H1 (cell line): ENCODE measurements at regions of chr3 and their contacts with region 1.

Region 1: GRCh38 chr3:39447637-39448483 is 19.6 kb upstream of the MOBP start:
- DNase-seq: peak; percentile 46 to 69
- H3K4me3 ChIP-seq: no peak overlapping the region
- H3K27ac ChIP-seq: no peak overlapping the region
- H3K4me1 ChIP-seq: no peaks in the 10 kb centered on the region
- H3K27me3 ChIP-seq: no peaks in the 10 kb centered on the region
- CTCF ChIP-seq: peak; percentile 52 to 97 (median 90)
- EP300 ChIP-seq: no peak
- POLR2A ChIP-seq: no peak
- RAD21 ChIP-seq: peak; percentile 91 to 95

Region 2: GRCh38 chr3:39414421-39414907 is 33.4 kb before region 1 on chr3:
- CTCF ChIA-PET with region 1: interaction called, 14 read pairs
- POLR2A ChIA-PET with region 1: interaction called, 30 read pairs
- DNase-seq: peak in 1 of 2 experiments; percentile 61
- H3K4me3 ChIP-seq: no peak overlapping the region
- H3K27ac ChIP-seq: peak overlapping the region; percentile 32; the same call in 1 of the 2 replicates
- H3K4me1 ChIP-seq: peaks cover 0 to 3% (median 0%) of the 10 kb centered on the region in 4 experiments; a peak in 3 of 7 replicates
- H3K27me3 ChIP-seq: no peaks in the 10 kb centered on the region
- CTCF ChIP-seq: no peak
- EP300 ChIP-seq: no peak
- POLR2A ChIP-seq: peak; percentile 86 to 95
- RAD21 ChIP-seq: no peak

Region 3: GRCh38 chr3:39434574-39434973 is 13.3 kb before region 1 on chr3:
- CTCF ChIA-PET with region 1: interaction called, 36 read pairs
- POLR2A ChIA-PET with region 1: no interaction called
- DNase-seq: no peak
- H3K4me3 ChIP-seq: no peak overlapping the region
- H3K27ac ChIP-seq: no peak overlapping the region; the same call in 1 of the 2 replicates
- H3K4me1 ChIP-seq: no peaks in the 10 kb centered on the region
- H3K27me3 ChIP-seq: no peaks in the 10 kb centered on the region
- CTCF ChIP-seq: no peak
- EP300 ChIP-seq: no peak
- POLR2A ChIP-seq: no peak
- RAD21 ChIP-seq: no peak

Region 4: DNA sequence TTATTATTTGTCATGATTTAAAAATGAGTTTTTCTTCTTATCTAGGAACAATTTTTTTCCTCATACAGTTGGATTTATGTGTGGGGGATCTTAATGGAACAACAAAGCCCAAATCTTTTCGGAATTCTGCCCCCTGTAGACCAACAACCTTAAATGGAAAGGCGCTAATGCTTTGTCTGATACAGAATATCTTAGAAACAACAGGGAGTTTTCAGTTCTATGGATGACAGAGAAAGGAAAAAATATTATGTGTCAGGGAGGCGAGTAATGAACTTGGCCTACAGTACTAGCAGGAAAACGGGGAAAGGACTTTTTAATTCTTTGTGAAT is 20.2 kb after region 1 on chr3:
- CTCF ChIA-PET with region 1: interaction called, 18 read pairs
- POLR2A ChIA-PET with region 1: interaction called, 3 read pairs
- DNase-seq: no peak
- H3K4me3 ChIP-seq: no peak overlapping the region
- H3K27ac ChIP-seq: no peak overlapping the region
- H3K4me1 ChIP-seq: peaks cover 0 to 5% (median 1%) of the 10 kb centered on the region in 4 experiments; a peak in 3 of 7 replicates
- H3K27me3 ChIP-seq: no peaks in the 10 kb centered on the region
- CTCF ChIP-seq: peak in 1 of 3 experiments; percentile 26; a peak in 1 of 4 replicates
- EP300 ChIP-seq: no peak
- POLR2A ChIP-seq: no peak
- RAD21 ChIP-seq: no peak

Region 5: DNA sequence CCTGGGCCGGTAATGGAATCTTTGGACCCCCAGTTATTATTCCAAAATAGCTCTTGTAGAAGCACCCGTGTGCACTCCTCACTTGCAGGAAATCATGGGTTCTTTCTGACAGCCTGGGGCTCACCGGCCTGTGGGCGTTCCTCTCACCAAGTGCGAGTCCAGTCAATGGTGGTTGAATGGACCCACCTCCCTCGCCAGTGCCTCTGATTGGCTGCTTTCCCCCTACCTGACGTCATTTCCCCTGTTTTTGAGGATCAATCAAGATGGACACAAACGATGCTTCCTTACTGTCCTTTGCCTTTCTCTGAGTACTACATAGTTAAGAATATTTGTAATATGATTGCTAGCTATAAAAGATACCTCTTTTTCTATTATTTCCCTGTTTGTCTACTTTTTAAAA is 37.7 kb after region 1 on chr3:
- CTCF ChIA-PET with region 1: interaction called, 12 read pairs
- POLR2A ChIA-PET with region 1: no interaction called
- DNase-seq: no peak
- H3K4me3 ChIP-seq: no peak overlapping the region
- H3K27ac ChIP-seq: no peak overlapping the region
- H3K4me1 ChIP-seq: no peaks in the 10 kb centered on the region
- H3K27me3 ChIP-seq: no peaks in the 10 kb centered on the region
- CTCF ChIP-seq: no peak
- EP300 ChIP-seq: no peak
- POLR2A ChIP-seq: no peak
- RAD21 ChIP-seq: no peak

Region 6: GRCh38 chr3:39569095-39569494 is 121.2 kb after region 1 on chr3:
- CTCF ChIA-PET with region 1: no interaction called
- POLR2A ChIA-PET with region 1: no interaction called
- DNase-seq: no peak
- H3K4me3 ChIP-seq: no peak overlapping the region
- H3K27ac ChIP-seq: no peak overlapping the region
- H3K4me1 ChIP-seq: peaks cover 0 to 3% (median 0%) of the 10 kb centered on the region in 4 experiments; a peak in 1 of 7 replicates
- H3K27me3 ChIP-seq: no peaks in the 10 kb centered on the region
- CTCF ChIP-seq: no peak
- EP300 ChIP-seq: no peak
- POLR2A ChIP-seq: no peak
- RAD21 ChIP-seq: no peak

Region 7: DNA sequence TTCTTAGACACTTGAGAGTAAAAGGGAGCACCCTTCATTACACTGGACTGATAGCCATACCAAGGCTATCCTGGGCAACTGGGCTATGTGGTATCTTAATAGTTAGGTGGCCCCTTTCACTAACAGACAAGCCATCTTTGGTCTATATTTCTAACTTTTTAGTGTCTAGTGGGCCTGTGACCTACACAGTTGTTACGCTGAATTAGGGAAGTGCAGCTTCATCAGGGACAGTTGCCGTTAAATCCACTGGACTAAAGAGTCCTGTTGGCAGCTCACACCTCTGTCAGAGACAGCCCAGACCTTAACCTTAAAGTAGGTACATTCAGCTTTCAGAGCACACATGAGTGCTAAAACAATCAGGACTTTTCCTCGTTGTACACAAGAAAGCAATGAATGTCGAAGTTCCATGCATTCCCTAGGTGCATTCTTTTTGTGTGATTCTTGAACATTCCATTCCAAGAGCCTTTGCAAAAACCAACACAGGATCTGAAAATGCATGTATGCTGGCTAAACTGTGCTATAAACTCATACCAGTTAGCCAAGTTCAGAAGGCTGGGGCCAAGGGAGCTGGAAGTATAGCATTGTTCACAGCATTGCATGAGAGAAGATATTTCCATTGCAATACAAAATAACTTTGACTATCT is 631.5 kb after region 1 on chr3:
- CTCF ChIA-PET with region 1: no interaction called
- POLR2A ChIA-PET with region 1: no interaction called
- DNase-seq: no peak
- H3K4me3 ChIP-seq: no peak overlapping the region
- H3K27ac ChIP-seq: no peak overlapping the region
- H3K4me1 ChIP-seq: no peaks in the 10 kb centered on the region
- H3K27me3 ChIP-seq: no peaks in the 10 kb centered on the region
- CTCF ChIP-seq: no peak
- EP300 ChIP-seq: no peak
- POLR2A ChIP-seq: no peak
- RAD21 ChIP-seq: no peak